IMR-90 (cell line): ENCODE measurements at regions of chr1 and their contacts with region 1.

Region 1: DNA sequence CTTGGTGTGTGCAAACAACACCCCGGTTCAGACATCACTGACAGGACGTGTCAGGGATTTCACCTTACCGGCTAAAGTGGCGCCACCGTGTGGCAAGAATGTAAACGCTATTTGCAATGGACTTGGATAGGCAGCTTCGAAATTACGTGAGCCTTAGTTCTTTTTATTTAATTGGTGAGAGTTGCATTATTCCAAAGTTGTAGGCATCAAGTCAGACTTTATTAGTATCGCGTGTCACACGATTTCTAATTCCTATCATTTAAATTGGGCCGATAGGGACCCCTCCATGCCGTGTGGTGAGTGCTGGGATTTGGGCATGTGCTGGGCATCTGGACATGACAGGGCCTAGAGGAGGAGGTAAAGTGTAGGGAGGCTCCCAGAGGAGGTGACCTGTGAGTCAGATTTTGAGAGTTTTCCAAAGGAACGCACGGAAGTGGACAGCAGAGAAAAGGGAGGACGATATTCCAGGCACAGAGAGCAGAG is 14.5 kb upstream of the CPT2 start:
- DNase-seq: peak; percentile 67
- ATAC-seq: no peak
- H3K4me3 ChIP-seq: no peak overlapping the region
- H3K27ac ChIP-seq: peak overlapping the region; percentile 98; the same call in 1 of the 2 replicates
- H3K4me1 ChIP-seq: peaks cover 44% of the 10 kb centered on the region
- H3K27me3 ChIP-seq: no peaks in the 10 kb centered on the region
- CTCF ChIP-seq: peak; percentile 55
- POLR2A ChIP-seq: no peak
- RAD21 ChIP-seq: peak; percentile 45; the same call in 1 of the 2 replicates

Region 2: GRCh38 chr1:52702886-52703787 is 479.0 kb before region 1 on chr1:
- CTCF ChIA-PET with region 1: interaction called, 6 read pairs
- POLR2A ChIA-PET with region 1: no interaction called
- dilution Hi-C with region 1: no loop called
- in situ Hi-C with region 1: loop called (anchors 10 kb)
- intact Hi-C with region 1: loop called (anchors 5 kb)
- DNase-seq: peak; percentile 80
- ATAC-seq: peak; percentile 85
- H3K4me3 ChIP-seq: peak overlapping the region; percentile 55
- H3K27ac ChIP-seq: peak overlapping the region; percentile 42
- H3K4me1 ChIP-seq: peaks cover 8% of the 10 kb centered on the region
- H3K27me3 ChIP-seq: no peaks in the 10 kb centered on the region
- CTCF ChIP-seq: no peak
- POLR2A ChIP-seq: no peak
- RAD21 ChIP-seq: no peak

Region 3: DNA sequence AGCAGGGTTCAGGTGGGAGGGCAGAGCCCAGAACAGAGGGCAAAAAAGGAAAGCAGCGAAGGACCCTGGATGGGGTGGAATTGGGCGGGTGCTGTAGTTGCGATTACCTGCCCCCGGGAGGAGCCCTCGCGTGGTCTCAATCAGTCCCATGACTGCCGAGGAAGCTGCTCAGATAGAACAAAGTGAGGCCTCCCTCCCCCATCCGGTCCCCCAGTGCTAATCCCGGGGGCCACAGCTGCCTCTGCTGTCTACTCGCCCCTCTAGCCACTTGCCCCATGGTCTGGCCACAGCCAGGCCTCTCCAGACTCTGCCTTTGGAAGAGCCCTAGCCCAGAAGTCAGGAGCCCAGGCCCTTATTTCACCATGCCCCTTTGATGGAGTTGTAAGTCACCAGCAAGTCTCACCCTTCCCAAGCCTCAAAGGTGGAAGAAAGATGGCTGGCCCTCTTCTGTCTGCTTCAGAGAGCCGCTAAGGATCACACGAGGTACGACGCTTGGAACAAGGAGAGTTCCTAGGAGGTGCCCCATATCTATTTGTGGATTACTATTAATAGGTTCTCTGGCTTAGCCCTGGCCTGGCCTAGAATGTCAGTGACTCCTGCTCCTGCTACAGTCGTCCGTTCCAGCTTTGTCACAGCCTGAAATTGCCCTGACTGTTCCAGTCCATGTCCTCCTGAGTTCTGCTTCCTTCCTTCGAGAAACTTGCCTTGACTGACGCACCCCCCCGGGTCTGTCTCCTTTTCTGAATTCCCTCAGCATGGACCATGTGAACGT is 277.0 kb before region 1 on chr1:
- CTCF ChIA-PET with region 1: interaction called, 4 read pairs
- POLR2A ChIA-PET with region 1: no interaction called
- dilution Hi-C with region 1: no loop called
- in situ Hi-C with region 1: loop called (anchors 10 kb)
- intact Hi-C with region 1: no loop called
- DNase-seq: no peak
- ATAC-seq: peak; percentile 66
- H3K4me3 ChIP-seq: no peak overlapping the region
- H3K27ac ChIP-seq: no peak overlapping the region
- H3K4me1 ChIP-seq: no peaks in the 10 kb centered on the region
- H3K27me3 ChIP-seq: no peaks in the 10 kb centered on the region
- CTCF ChIP-seq: peak; percentile 35; the same call in 1 of the 2 replicates
- POLR2A ChIP-seq: no peak
- RAD21 ChIP-seq: peak; percentile 55

Region 4: DNA sequence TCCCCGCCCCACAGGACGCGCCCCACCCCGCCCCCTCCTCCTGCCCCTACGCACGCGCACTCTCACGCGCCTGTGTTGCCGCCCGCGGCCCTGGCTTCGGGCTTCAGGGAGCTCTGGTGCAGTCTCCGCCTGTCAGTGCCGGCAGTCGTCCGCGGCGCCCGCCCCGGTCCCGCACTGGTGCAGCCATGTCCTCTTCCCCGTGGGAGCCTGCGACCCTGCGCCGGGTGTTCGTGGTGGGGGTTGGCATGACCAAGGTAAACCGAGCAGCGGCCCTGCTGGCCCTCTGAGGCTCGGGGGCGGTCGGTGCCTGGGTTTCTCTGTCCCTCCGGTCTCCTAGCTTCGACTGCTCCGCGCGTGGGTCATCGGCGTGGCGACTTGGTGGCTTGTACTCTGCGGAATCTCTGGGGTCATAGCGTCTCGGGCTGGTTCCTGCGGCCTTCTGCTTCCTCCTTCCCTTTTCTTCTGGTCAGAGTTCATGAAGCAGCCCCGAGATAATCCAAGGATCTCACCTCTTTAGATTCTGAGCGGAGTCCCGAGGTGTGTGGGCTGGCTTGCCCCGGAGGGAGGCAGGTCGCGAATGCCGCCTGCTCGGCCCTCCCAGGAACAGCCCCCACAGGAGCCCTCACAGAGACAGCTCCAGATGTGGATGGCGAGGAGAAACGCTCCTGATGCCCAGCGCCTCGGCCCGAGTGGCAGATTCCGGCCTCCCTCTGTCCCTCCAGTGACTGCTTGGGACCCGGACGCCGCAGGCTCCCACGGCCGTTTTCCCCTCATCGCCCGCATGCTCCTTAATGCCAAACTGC is 254.7 kb before region 1 on chr1 and contains the start of gene SCP2:
- CTCF ChIA-PET with region 1: no interaction called
- POLR2A ChIA-PET with region 1: no interaction called
- dilution Hi-C with region 1: no loop called
- in situ Hi-C with region 1: no loop called
- intact Hi-C with region 1: loop called (anchors 10 kb)
- DNase-seq: peak; percentile 56
- ATAC-seq: peak; percentile 94
- H3K4me3 ChIP-seq: peak within 1 kb of the TSS; percentile 77
- H3K27ac ChIP-seq: peak within 1 kb of the TSS; percentile 79
- H3K4me1 ChIP-seq: 0 out of 2 replicates have a peak, but pooled peaks cover 3% of the 10 kb centered on the region
- H3K27me3 ChIP-seq: no peaks in the 10 kb centered on the region
- CTCF ChIP-seq: no peak
- POLR2A ChIP-seq: no peak
- RAD21 ChIP-seq: no peak
- total RNA-seq, gene SCP2: 70.4 and 140 TPM in 2 replicates

Region 5: DNA sequence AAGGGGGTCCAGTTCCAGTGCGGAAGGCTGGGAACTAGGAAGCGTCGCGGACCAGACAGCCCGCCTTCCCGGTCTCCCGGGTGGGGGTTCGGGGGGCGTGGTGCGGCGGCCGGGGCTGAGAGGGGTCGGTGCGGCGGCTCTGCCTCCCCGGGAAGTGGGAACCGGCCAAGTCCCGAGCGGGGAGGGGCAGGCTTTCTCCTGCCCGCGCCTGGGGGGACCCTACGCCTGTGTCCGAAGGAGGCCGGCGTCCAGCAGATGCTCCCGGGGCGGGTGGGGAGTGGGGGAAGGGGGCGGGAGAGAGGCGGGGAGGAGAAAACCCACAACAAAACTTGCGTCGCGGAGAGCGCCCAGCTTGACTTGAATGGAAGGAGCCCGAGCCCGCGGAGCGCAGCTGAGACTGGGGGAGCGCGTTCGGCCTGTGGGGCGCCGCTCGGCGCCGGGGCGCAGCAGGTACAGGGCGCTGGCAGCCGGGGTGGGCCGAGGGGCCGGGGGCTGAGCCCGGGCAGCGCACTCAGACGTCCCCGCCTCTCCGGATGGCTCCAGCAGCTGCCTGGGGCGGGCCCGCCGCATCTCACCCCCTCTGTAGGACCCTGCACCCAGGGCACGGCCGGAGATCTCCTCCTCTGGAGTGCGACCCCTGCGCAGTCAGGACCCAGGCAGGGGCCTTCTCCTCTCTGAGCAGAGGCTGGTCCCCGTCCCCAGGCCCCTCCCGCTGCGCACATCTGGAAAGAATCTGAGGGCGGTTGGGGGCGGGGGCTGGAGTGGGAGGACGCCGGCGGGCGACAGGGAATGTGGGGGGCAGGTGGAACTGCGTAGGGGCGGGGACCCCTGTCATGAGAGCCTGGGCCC is 120.1 kb before region 1 on chr1 and contains the start of gene PODN:
- CTCF ChIA-PET with region 1: interaction called, 4 read pairs
- POLR2A ChIA-PET with region 1: no interaction called
- dilution Hi-C with region 1: no loop called
- in situ Hi-C with region 1: no loop called
- intact Hi-C with region 1: loop called (anchors 5 kb)
- DNase-seq: no peak
- ATAC-seq: peak; percentile 57
- H3K4me3 ChIP-seq: peak within 1 kb of the TSS; percentile 92
- H3K27ac ChIP-seq: peak within 1 kb of the TSS; percentile 9; the same call in 1 of the 2 replicates
- H3K4me1 ChIP-seq: peaks cover 13% of the 10 kb centered on the region
- H3K27me3 ChIP-seq: peaks cover 2% of the 10 kb centered on the region; the same call in 1 of the 2 replicates
- CTCF ChIP-seq: no peak
- POLR2A ChIP-seq: no peak
- RAD21 ChIP-seq: no peak
- total RNA-seq, gene PODN: 0.54 and 0.56 TPM in 2 replicates

Region 6: GRCh38 chr1:53107570-53108322 is 74.4 kb before region 1 on chr1:
- CTCF ChIA-PET with region 1: interaction called, 3 read pairs
- POLR2A ChIA-PET with region 1: no interaction called
- dilution Hi-C with region 1: no loop called
- in situ Hi-C with region 1: no loop called
- intact Hi-C with region 1: loop called (anchors 2 kb)
- DNase-seq: peak; percentile 94
- ATAC-seq: peak; percentile 86
- H3K4me3 ChIP-seq: no peak overlapping the region
- H3K27ac ChIP-seq: peak overlapping the region; percentile 96
- H3K4me1 ChIP-seq: peaks cover 30% of the 10 kb centered on the region
- H3K27me3 ChIP-seq: no peaks in the 10 kb centered on the region
- CTCF ChIP-seq: no peak
- POLR2A ChIP-seq: no peak
- RAD21 ChIP-seq: peak; percentile 37

Region 7: DNA sequence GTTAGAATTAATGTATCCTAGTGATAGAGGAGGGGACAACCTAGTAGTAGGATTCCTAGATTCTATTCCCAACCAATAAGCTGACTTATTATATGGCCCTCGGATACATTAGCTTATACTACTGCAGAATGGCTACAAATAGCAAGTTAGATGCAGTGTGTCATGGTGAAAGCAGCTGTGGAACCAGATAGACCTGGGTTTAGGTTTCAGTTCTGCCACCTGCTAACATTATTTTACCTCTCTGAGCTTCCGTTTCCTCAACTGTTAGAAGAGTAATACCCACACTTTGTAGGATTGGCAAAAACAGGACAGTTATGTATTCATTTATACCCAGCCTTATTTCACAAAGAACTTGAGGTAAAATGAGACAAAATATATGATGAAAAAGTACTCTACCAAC is 77.8 kb after region 1 on chr1:
- CTCF ChIA-PET with region 1: no interaction called
- POLR2A ChIA-PET with region 1: no interaction called
- dilution Hi-C with region 1: no loop called
- in situ Hi-C with region 1: no loop called
- intact Hi-C with region 1: no loop called
- DNase-seq: no peak
- ATAC-seq: no peak
- H3K4me3 ChIP-seq: no peak overlapping the region
- H3K27ac ChIP-seq: no peak overlapping the region
- H3K4me1 ChIP-seq: peaks cover 3% of the 10 kb centered on the region; the same call in 1 of the 2 replicates
- H3K27me3 ChIP-seq: no peaks in the 10 kb centered on the region
- CTCF ChIP-seq: no peak
- POLR2A ChIP-seq: no peak
- RAD21 ChIP-seq: no peak